Activated naive CD4-positive, alpha-beta T cell treated with anti-CD3 and anti-CD28 coated beads for 36 hours (primary cell): ENCODE measurements at regions of chr14 and their contacts with region 1.

Region 1: GRCh38 chr14:55071870-55072640 is 20.6 kb downstream of the MAPK1IP1L start:
- DNase-seq: peak; percentile 72
- H3K4me3 Mint-ChIP-seq: peak overlapping the region; percentile 51
- H3K27ac Mint-ChIP-seq: peak overlapping the region; percentile 88
- H3K4me1 Mint-ChIP-seq: peaks cover 31% of the 10 kb centered on the region
- H3K27me3 Mint-ChIP-seq: no peaks in the 10 kb centered on the region

Region 2: DNA sequence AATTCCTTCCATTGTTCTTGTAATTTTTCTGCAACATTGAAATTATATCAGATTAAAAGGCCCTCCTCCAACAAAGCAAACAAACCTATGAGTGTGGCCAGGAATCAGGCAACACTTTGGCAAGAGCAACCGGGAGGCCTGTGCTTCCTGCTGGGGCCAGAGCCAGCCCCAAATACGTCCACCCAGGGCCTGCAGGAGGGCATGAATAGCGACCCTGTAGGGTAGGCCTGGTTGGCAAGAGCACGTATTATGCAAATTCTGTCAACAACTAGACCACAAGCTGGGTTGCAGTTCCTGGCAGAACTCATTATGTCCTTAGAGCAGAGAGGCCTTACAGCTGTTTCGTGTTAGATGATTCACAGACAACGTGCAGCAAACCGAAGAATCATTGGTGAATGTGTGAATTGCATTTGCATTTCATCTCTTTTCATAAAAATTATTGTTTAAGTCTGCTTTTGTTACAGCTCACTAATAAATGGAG is 30.1 kb after region 1 on chr14:
- CTCF ChIA-PET with region 1: no interaction called
- intact Hi-C with region 1: loop called (anchors 1 kb)
- DNase-seq: peak; percentile 70
- H3K4me3 Mint-ChIP-seq: no peak overlapping the region
- H3K27ac Mint-ChIP-seq: no peak overlapping the region
- H3K4me1 Mint-ChIP-seq: peaks cover 38% of the 10 kb centered on the region
- H3K27me3 Mint-ChIP-seq: no peaks in the 10 kb centered on the region

Region 3: DNA sequence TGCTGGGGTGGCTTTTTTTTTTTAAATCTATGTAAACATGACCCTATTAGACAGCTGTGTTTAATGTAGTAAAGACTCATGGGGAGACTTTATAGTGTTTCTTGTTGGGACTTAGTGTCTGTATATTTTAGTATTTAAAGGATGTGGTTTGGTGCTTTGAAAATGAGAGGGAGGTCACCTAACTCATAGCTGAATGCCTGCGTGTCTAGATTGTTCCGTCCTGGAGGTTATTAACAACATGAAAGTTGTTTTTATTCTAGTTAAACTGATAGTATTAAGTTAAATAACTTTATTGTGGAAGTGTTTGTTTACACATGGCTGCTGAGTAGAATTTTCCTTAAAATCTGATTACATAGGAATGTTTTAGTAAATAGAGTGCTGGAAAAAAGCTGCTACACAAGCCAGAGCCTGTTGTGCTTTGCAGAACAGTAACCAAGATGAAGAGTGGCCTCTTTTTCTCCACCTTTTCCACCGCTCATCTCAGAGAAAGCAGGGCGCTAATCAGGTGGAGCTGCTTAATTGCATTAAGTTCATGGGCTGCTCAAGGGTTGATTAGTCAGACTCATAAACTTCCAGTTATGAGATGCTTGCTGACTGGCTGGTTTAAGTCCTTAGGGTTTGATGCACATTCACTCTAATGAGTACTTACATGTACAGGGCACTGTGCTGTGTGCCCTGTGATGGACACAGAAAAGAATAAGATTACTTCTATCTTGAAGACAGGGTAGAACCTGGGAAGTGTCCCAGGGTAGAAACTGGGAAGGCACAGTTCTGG is 261.8 kb after region 1 on chr14:
- CTCF ChIA-PET with region 1: interaction called, 4 read pairs
- intact Hi-C with region 1: loop called (anchors 5 kb)
- DNase-seq: peak; percentile 21
- H3K4me3 Mint-ChIP-seq: peak overlapping the region; percentile 10
- H3K27ac Mint-ChIP-seq: peak overlapping the region; percentile 78
- H3K4me1 Mint-ChIP-seq: peaks cover 82% of the 10 kb centered on the region
- H3K27me3 Mint-ChIP-seq: no peaks in the 10 kb centered on the region